PC-3 (cell line): ENCODE measurements at regions of chr15 and their contacts with region 1.

Region 1: DNA sequence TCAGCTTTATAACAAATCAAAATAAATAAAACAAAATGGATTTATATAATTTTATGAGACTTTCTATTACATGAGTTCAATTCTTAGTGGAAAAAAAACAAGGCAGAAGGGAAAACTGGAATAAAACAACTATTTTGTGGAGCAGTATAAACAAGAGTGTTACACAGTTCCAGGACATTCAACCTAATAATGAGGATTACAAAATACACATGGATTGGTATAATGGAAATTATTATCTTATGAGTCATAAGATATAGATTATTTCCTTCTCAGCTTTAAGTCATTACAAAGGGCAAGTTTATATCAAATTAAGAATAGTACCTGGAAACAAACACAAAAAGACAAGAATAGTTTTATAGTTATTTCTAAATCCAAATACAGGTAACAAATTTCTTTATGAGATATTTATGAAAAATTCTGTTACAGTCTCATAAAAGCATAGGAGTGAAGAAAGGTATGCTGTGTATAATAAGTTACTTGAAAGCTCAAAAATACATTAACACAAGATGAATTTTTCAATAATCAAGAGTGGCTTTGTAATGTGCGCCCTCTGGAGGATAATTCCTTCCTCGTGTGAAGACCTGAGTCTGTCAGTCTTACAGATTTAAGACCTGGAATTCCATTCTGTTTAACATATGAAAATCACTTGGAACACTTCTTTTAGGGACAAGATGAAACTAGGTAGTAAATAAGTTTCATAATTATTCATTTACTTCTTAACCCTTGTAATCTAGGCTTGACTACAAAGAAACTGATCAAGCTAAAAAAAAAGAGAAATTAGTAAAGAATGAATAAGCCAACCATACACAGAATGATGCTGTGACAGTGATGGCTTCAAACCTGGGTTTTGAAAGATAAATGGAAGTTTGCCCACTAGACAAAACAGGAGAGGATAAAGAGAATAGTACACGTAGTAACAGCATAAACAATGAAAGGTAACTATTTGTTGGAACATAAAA is 9.5 kb downstream of the COPS2 start:
- DNase-seq: peak; percentile 73
- ATAC-seq: peak; percentile 57
- H3K4me3 ChIP-seq: no peak overlapping the region
- H3K27ac ChIP-seq: no peak overlapping the region
- H3K4me1 ChIP-seq: peaks cover 6% of the 10 kb centered on the region
- H3K27me3 ChIP-seq: no peaks in the 10 kb centered on the region
- CTCF ChIP-seq: peak; percentile 83

Region 2: GRCh38 chr15:48984811-48985352 is 161.0 kb before region 1 on chr15:
- CTCF ChIA-PET with region 1: interaction called, 3 read pairs
- POLR2A ChIA-PET with region 1: no interaction called
- intact Hi-C with region 1: loop called (anchors 10 kb)
- DNase-seq: no peak
- ATAC-seq: no peak
- H3K4me3 ChIP-seq: no peak overlapping the region
- H3K27ac ChIP-seq: no peak overlapping the region
- H3K4me1 ChIP-seq: 0 out of 2 replicates have a peak, but pooled peaks cover 8% of the 10 kb centered on the region
- H3K27me3 ChIP-seq: no peaks in the 10 kb centered on the region
- CTCF ChIP-seq: no peak

Region 3: GRCh38 chr15:49023354-49023753 is 122.6 kb before region 1 on chr15:
- CTCF ChIA-PET with region 1: no interaction called
- POLR2A ChIA-PET with region 1: no interaction called
- intact Hi-C with region 1: no loop called
- DNase-seq: no peak
- ATAC-seq: no peak
- H3K4me3 ChIP-seq: no peak overlapping the region
- H3K27ac ChIP-seq: no peak overlapping the region
- H3K4me1 ChIP-seq: no peaks in the 10 kb centered on the region
- H3K27me3 ChIP-seq: no peaks in the 10 kb centered on the region
- CTCF ChIP-seq: no peak

Region 4: GRCh38 chr15:49046220-49047102 is 99.5 kb before region 1 on chr15 and contains the start of gene SECISBP2L:
- CTCF ChIA-PET with region 1: no interaction called
- POLR2A ChIA-PET with region 1: no interaction called
- intact Hi-C with region 1: loop called (anchors 5 kb)
- DNase-seq: peak; percentile 89
- ATAC-seq: peak; percentile 90
- H3K4me3 ChIP-seq: peak within 1 kb of the TSS; percentile 99
- H3K27ac ChIP-seq: peak within 1 kb of the TSS; percentile 23; the same call in 1 of the 2 replicates
- H3K4me1 ChIP-seq: peaks cover 15% of the 10 kb centered on the region
- H3K27me3 ChIP-seq: no peaks in the 10 kb centered on the region
- CTCF ChIP-seq: peak; percentile 50
- total RNA-seq, gene SECISBP2L: 13.6 and 18.6 TPM in 2 replicates

Region 5: DNA sequence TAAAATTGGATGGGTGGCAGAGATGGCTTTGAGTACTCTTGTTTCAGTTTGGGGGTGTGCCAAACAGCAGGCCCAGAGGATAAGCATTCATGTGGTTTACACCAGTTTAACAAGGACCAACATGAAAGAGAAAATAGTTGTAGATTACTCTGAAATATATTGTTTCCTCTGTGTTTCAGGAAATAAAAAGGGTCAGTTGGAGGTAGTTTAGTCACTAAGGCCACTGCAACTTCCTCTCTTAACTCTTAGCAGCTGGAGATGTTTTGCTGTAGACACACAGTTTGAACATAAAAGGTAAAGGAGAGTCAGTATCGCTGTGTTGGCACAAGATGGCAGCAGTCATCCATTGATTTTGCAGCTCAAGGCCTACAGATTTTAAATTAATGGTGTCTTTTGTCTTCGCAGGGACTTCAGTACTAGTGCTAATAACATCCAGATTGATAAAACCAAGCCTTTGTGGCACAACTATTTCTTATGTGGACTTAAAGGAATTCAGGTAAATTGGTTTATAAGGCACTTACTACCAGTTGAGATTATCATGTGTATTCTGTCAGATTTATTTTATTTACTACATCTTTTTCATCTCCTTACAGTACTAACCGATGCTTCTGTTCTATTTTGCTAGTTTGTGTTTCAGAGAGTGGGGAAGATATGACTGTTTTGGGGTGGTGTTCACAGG is 89.7 kb after region 1 on chr15:
- CTCF ChIA-PET with region 1: no interaction called
- POLR2A ChIA-PET with region 1: no interaction called
- intact Hi-C with region 1: no loop called
- DNase-seq: peak; percentile 60
- ATAC-seq: peak; percentile 88
- H3K4me3 ChIP-seq: no peak overlapping the region
- H3K27ac ChIP-seq: 0 out of 2 replicates have a peak overlapping the region, but pooled peaks have one; percentile 10
- H3K4me1 ChIP-seq: peaks cover 5% of the 10 kb centered on the region; the same call in 1 of the 2 replicates
- H3K27me3 ChIP-seq: no peaks in the 10 kb centered on the region
- CTCF ChIP-seq: peak; percentile 81

Region 6: GRCh38 chr15:49558924-49559323 is 413.0 kb after region 1 on chr15:
- CTCF ChIA-PET with region 1: no interaction called
- POLR2A ChIA-PET with region 1: no interaction called
- intact Hi-C with region 1: no loop called
- DNase-seq: no peak
- ATAC-seq: no peak
- H3K4me3 ChIP-seq: no peak overlapping the region
- H3K27ac ChIP-seq: no peak overlapping the region
- H3K4me1 ChIP-seq: no peaks in the 10 kb centered on the region
- H3K27me3 ChIP-seq: no peaks in the 10 kb centered on the region
- CTCF ChIP-seq: no peak